ENCODE measurements at regions of chr5 and their contacts with region 1.

Region 1: DNA sequence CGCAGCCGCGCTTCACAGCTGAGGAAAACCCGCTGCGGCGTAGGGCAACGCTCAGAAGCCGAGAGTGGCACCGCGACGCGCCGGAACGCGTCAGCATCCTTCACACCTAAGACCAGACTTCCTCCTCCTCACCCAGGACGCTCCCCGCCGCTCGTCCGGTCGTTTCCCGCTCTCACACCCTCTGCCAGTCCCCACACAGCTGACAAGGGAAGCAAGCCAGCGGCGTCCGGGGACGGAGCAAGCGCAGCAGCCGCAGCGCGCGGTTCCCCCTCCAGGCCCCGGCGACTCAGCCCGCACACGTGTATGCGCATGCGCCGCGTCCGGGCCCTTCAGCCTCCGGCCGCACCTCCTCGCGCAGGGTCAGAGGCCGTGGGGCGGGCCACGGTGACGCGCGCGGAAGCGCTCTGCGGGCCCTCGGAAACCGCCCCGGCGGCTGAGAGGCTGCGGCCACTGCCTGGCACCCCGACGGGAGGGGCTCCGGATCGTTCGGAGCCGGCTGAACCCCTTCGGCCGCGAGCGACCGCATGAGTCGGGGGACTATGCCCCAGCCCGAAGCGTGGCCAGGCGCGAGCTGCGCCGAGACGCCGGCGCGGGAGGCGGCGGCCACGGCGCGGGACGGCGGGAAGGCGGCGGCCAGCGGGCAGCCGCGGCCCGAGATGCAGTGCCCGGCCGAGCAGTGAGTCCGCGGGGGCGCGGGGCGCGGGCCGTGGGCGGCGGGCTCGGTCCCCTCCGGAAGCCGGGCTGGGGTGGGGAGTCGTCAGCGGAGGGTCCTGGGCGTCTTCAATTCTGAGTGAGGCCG is at the start of gene OTULIN:
- DNase-seq: peak; percentile 85 to 95
- ATAC-seq: peak; percentile 67 to 86 (median 79)
- H3K4me3 ChIP-seq: peak within 1 kb of the TSS; percentile 82
- H3K4me3 Mint-ChIP-seq: peak within 1 kb of the TSS; percentile 93
- H3K27ac ChIP-seq: peak within 1 kb of the TSS; percentile 93
- H3K27ac Mint-ChIP-seq: peak within 1 kb of the TSS; percentile 96 to 98
- H3K4me1 ChIP-seq: peaks cover 50% of the 10 kb centered on the region
- H3K4me1 Mint-ChIP-seq: peaks cover 54 to 57% of the 10 kb centered on the region in 2 donors
- H3K27me3 ChIP-seq: no peaks in the 10 kb centered on the region
- H3K27me3 Mint-ChIP-seq: no peaks in the 10 kb centered on the region
- CTCF ChIP-seq: no peak
- total RNA-seq, gene OTULIN: 96.5 to 166 (median 102) TPM

Region 2: GRCh38 chr5:14250084-14250695 is 414.3 kb before region 1 on chr5:
- intact Hi-C with region 1: loop called (anchors 10 kb)
- DNase-seq: no peak
- ATAC-seq: peak in 2 of 3 donors; percentile 68 to 77
- H3K4me3 ChIP-seq: no peak overlapping the region
- H3K4me3 Mint-ChIP-seq: no peak overlapping the region
- H3K27ac ChIP-seq: peak overlapping the region; percentile 34
- H3K27ac Mint-ChIP-seq: peak overlapping the region in 1 of 2 donors; percentile 64
- H3K4me1 ChIP-seq: peaks cover 21% of the 10 kb centered on the region
- H3K4me1 Mint-ChIP-seq: peaks cover 22 to 51% of the 10 kb centered on the region in 2 donors
- H3K27me3 ChIP-seq: no peaks in the 10 kb centered on the region
- H3K27me3 Mint-ChIP-seq: no peaks in the 10 kb centered on the region
- CTCF ChIP-seq: no peak

Region 3: GRCh38 chr5:14581333-14581890 is 83.1 kb before region 1 on chr5 and contains the start of gene OTULINL:
- intact Hi-C with region 1: loop called (anchors 1 kb)
- DNase-seq: peak; percentile 83 to 91
- ATAC-seq: peak; percentile 82 to 91 (median 82)
- H3K4me3 ChIP-seq: peak within 1 kb of the TSS; percentile 68
- H3K4me3 Mint-ChIP-seq: peak within 1 kb of the TSS; percentile 83
- H3K27ac ChIP-seq: peak within 1 kb of the TSS; percentile 89
- H3K27ac Mint-ChIP-seq: peak within 1 kb of the TSS; percentile 81 to 86
- H3K4me1 ChIP-seq: peaks cover 25% of the 10 kb centered on the region
- H3K4me1 Mint-ChIP-seq: peaks cover 29 to 44% of the 10 kb centered on the region in 2 donors
- H3K27me3 ChIP-seq: no peaks in the 10 kb centered on the region
- H3K27me3 Mint-ChIP-seq: peaks cover 0 to 16% of the 10 kb centered on the region in 2 donors
- CTCF ChIP-seq: no peak
- total RNA-seq, gene OTULINL: 33.0 to 67.4 (median 51.8) TPM

Region 4: GRCh38 chr5:14706615-14707021 is 42.1 kb after region 1 on chr5:
- intact Hi-C with region 1: loop called (anchors 5 kb)
- DNase-seq: peak in 1 of 2 donors; percentile 81
- ATAC-seq: peak; percentile 64 to 88 (median 75)
- H3K4me3 ChIP-seq: no peak overlapping the region
- H3K4me3 Mint-ChIP-seq: peak overlapping the region; percentile 79
- H3K27ac ChIP-seq: peak overlapping the region; percentile 59
- H3K27ac Mint-ChIP-seq: peak overlapping the region; percentile 88 to 91
- H3K4me1 ChIP-seq: peaks cover 37% of the 10 kb centered on the region
- H3K4me1 Mint-ChIP-seq: peaks cover 50 to 65% of the 10 kb centered on the region in 2 donors
- H3K27me3 ChIP-seq: no peaks in the 10 kb centered on the region
- H3K27me3 Mint-ChIP-seq: no peaks in the 10 kb centered on the region
- CTCF ChIP-seq: no peak

Region 5: GRCh38 chr5:14809369-14810155 is 145.1 kb after region 1 on chr5:
- intact Hi-C with region 1: loop called (anchors 10 kb)
- DNase-seq: peak; percentile 56 to 82
- ATAC-seq: peak; percentile 85 to 92 (median 90)
- H3K4me3 ChIP-seq: peak overlapping the region; percentile 21
- H3K4me3 Mint-ChIP-seq: peak overlapping the region; percentile 87
- H3K27ac ChIP-seq: peak overlapping the region; percentile 65
- H3K27ac Mint-ChIP-seq: peak overlapping the region; percentile 90 to 94
- H3K4me1 ChIP-seq: peaks cover 39% of the 10 kb centered on the region
- H3K4me1 Mint-ChIP-seq: peaks cover 64 to 67% of the 10 kb centered on the region in 2 donors
- H3K27me3 ChIP-seq: no peaks in the 10 kb centered on the region
- H3K27me3 Mint-ChIP-seq: no peaks in the 10 kb centered on the region
- CTCF ChIP-seq: no peak

Region 6: DNA sequence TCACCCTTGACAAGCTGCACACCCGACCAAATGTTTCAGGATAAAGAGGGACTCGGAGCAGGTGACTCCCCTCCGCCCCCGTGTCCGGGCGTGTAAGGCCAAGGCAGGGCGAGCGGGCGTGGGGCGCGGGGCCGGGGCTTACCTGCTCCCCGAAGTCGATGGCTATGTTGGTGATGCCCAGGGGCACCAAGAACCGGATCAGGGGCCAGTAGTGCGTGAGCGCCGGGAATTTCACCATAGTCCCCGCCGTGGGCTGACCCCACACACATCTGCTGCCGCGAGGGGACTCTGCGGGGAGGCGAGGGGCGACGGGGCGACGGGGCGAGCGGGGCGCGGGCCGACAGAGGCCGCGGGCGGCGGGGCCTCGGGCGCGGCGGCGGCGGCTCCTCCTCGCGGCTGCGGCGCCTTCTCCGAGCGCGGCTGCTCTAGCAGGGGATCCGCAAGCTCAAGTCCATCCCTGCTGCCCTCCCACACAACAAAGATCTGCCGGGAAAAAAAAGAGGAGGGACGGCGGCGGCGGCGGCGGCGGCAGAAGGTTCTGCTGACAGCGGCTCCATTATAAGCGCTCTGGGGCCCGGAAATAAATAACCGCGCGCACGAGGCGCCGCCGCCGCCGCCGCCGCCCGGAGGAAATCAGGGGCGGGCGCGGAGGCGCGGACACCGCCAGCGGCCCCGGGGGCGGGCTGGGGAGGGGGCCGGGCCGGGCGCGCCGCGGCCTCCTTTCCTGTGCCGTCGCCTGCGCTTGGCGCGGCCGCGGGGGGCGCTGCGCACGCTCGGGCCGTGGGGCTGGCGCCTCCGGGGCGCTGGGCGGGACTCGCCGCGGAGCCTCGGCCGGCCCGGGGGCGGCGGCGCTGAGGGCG is 206.9 kb after region 1 on chr5 and contains the start of gene ANKH:
- intact Hi-C with region 1: loop called (anchors 5 kb)
- DNase-seq: peak; percentile 79 to 93
- ATAC-seq: peak; percentile 86 to 97 (median 91)
- H3K4me3 ChIP-seq: peak within 1 kb of the TSS; percentile 66
- H3K4me3 Mint-ChIP-seq: peak within 1 kb of the TSS; percentile 97
- H3K27ac ChIP-seq: peak within 1 kb of the TSS; percentile 74
- H3K27ac Mint-ChIP-seq: peak within 1 kb of the TSS; percentile 85 to 94
- H3K4me1 ChIP-seq: peaks cover 22% of the 10 kb centered on the region
- H3K4me1 Mint-ChIP-seq: peaks cover 26 to 29% of the 10 kb centered on the region in 2 donors
- H3K27me3 ChIP-seq: peaks cover 3% of the 10 kb centered on the region
- H3K27me3 Mint-ChIP-seq: peaks cover 6 to 7% of the 10 kb centered on the region in 2 donors
- CTCF ChIP-seq: no peak
- total RNA-seq, gene ANKH: 52.9 to 78.0 (median 63.8) TPM